Endothelial cell of umbilical vein (primary cell): ENCODE measurements at regions of chr11 and their contacts with region 1.

Region 1: GRCh38 chr11:101003468-101003867 is 126.1 kb downstream of the PGR start:
- DNase-seq: no peak
- H3K4me3 ChIP-seq: no peak overlapping the region
- H3K27ac ChIP-seq: no peak overlapping the region
- H3K4me1 ChIP-seq: no peaks in the 10 kb centered on the region
- H3K27me3 ChIP-seq: no peaks in the 10 kb centered on the region
- CTCF ChIP-seq: no peak
- POLR2A ChIP-seq: no peak

Region 2: DNA sequence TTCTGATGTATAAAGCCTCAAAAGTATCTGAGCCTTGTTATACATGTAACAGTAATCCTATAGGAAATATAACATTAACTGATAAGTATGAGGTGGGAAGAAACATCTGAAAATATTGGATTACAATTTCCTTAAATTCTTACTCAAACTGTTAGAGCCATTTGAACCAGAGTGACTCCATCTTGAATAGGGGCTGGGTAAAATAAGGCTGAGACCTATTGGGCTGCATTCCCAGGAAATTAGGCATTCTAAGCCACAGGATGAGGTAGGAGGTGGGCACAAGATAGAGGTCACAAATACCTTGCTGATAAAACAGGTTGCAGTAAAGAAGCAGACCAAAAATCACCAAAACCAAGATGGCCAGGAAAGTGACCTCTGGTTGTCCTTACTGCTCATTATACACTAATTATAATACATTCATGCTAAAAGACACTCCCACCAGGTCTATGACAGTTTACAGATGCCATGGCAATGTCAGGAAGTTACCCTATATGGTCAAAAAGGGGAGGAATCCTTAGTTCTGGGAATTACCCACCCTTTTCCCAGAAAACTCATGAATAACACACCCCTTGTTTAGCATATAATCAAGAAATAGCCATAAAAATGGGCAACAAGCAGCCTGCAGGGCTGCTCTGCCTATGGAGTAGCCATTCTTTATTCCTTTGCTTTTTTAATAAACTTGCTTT is 11.3 kb after region 1 on chr11:
- CTCF ChIA-PET with region 1: no interaction called
- POLR2A ChIA-PET with region 1: no interaction called
- dilution Hi-C with region 1: no loop called
- intact Hi-C with region 1: no loop called
- DNase-seq: no peak
- H3K4me3 ChIP-seq: no peak overlapping the region
- H3K27ac ChIP-seq: no peak overlapping the region
- H3K4me1 ChIP-seq: no peaks in the 10 kb centered on the region
- H3K27me3 ChIP-seq: no peaks in the 10 kb centered on the region
- CTCF ChIP-seq: no peak
- POLR2A ChIP-seq: no peak

Region 3: GRCh38 chr11:101166038-101166437 is 162.6 kb after region 1 on chr11:
- CTCF ChIA-PET with region 1: no interaction called
- POLR2A ChIA-PET with region 1: no interaction called
- dilution Hi-C with region 1: no loop called
- intact Hi-C with region 1: no loop called
- DNase-seq: no peak
- H3K4me3 ChIP-seq: no peak overlapping the region
- H3K27ac ChIP-seq: no peak overlapping the region
- H3K4me1 ChIP-seq: no peaks in the 10 kb centered on the region
- H3K27me3 ChIP-seq: no peaks in the 10 kb centered on the region
- CTCF ChIP-seq: no peak
- POLR2A ChIP-seq: no peak

Region 4: DNA sequence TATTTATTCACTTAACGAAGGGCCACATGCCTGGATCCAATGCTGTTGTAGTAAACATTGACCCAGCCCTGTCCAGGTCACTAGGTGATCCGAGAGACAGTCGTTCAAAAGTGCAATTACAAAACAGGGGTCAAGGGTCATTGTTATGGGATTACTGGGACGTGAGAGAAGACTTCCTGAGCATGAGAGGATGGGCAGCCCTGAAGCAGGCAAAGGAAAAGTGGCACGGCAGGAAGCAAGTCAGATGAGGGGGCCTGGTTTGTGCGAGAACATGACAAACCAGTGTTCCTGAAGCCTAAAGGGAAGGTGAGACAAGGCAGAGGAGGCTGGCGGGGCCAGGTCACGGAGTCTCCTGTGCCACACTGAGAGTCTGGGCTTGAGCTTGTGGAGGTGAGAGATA is 1637.5 kb after region 1 on chr11:
- CTCF ChIA-PET with region 1: no interaction called
- POLR2A ChIA-PET with region 1: no interaction called
- dilution Hi-C with region 1: no loop called
- intact Hi-C with region 1: loop called (anchors 10 kb)
- DNase-seq: no peak
- H3K4me3 ChIP-seq: no peak overlapping the region
- H3K27ac ChIP-seq: no peak overlapping the region
- H3K4me1 ChIP-seq: no peaks in the 10 kb centered on the region
- H3K27me3 ChIP-seq: no peaks in the 10 kb centered on the region
- CTCF ChIP-seq: no peak
- POLR2A ChIP-seq: no peak